ENCODE measurements at regions of chr2 and their contacts with region 1.

Region 1: DNA sequence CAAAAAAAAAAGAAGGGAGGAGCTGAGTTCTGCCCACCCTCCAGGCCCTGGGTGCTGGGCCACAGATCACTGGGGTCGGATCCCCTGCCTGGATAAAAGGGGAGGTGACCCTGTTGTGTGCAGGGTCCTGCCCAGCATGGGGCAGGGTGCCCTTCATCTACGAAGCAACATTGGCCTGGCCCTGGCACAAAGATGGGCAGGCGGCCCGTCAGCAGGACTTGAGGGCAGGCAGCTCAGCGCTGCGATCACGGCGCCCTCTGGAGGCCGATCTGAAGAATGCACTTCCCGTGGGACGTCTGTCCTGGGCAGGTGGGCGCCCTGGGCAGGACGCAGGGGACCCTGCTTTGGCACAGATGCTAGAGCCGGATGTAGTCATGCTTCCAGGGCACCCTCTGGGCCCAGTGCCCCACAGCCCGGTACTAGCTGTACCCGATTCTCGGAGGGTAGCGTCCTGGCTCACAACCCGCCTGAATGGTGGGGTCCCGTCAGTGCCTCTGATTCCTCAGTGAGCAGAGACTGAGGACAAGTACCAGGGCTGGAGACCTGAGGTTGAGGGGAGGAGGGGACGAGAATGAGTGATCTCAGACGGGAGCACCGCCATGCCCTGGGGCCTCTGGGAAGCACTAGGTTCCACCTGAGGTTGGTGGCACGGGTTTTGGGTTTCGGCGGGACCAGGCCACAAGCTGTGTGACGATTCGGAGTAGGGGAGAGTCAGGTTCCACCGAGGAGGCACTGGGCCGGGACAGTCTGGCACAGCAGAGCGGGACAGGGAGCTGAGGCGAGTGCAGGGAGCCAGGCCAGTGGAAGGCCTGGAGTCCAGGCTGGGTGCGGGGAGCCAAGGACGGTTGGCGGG is 18.0 kb downstream of the ARID5A start:
- DNase-seq: peak; percentile 35 to 87 (median 61)
- ATAC-seq: peak; percentile 47 to 76 (median 74)
- H3K4me3 ChIP-seq: no peak overlapping the region
- H3K4me3 Mint-ChIP-seq: peak overlapping the region; percentile 6 to 39 (median 28)
- H3K27ac ChIP-seq: no peak overlapping the region
- H3K27ac Mint-ChIP-seq: peak overlapping the region in 1 of 2 donors; percentile 79
- H3K4me1 ChIP-seq: peaks cover 0 to 20% of the 10 kb centered on the region in 2 experiments
- H3K4me1 Mint-ChIP-seq: peaks cover 22 to 36% (median 32%) of the 10 kb centered on the region in 3 donors
- H3K27me3 ChIP-seq: no peaks in the 10 kb centered on the region
- H3K27me3 Mint-ChIP-seq: no peaks in the 10 kb centered on the region

Region 2: DNA sequence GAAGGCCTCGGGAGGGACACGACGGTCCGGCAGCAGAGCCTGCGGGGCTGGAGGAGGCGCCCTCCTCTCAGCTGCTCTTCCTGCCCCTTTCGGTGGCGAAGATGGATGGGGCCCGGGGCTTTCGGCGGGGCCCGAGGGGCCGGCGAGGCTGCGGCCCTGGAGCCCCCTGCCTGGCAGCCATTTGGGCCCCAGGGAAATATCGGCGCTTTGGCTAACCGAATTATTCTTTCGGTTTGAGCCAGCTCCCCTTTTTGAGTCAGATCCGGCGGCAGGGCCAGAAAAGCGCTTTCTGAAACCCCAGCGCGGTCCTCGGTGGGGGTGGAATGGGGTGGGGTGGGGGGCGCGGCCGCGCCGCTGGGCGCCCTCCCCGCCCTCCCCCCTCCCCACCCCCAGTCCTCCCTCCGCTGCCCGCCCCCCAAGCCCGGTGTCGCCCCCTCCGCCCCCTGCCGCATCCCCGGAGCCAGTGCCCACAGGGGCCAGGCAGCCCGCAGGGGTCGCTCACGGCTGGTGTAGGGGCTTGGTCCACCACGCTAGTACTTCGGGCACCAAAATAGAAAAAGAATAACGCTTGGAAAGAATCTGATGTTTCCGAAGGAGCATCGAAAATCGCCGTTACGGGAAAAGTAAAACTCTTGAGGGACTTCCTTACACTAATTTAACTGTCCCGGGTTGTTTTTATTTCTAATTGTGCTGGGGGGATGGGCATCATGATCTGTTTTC is 27.1 kb before region 1 on chr2:
- CTCF ChIA-PET with region 1: interaction called, 5 to 15 read pairs
- POLR2A ChIA-PET with region 1: interaction called in 1 of 2 experiments, 3 read pairs
- DNase-seq: peak in 21 of 35 experiments; percentile 25 to 66 (median 38)
- ATAC-seq: peak; percentile 19 to 35 (median 28)
- H3K4me3 ChIP-seq: peak overlapping the region; percentile 56 to 77
- H3K4me3 Mint-ChIP-seq: peak overlapping the region; percentile 76 to 78 (median 78)
- H3K27ac ChIP-seq: peak overlapping the region; percentile 44
- H3K27ac Mint-ChIP-seq: peak overlapping the region; percentile 83 to 87
- H3K4me1 ChIP-seq: peaks cover 12 to 82% of the 10 kb centered on the region in 2 experiments
- H3K4me1 Mint-ChIP-seq: peaks cover 54 to 78% (median 63%) of the 10 kb centered on the region in 3 donors
- H3K27me3 ChIP-seq: peaks cover 0 to 7% of the 10 kb centered on the region in 2 experiments
- H3K27me3 Mint-ChIP-seq: no peaks in the 10 kb centered on the region

Region 3: DNA sequence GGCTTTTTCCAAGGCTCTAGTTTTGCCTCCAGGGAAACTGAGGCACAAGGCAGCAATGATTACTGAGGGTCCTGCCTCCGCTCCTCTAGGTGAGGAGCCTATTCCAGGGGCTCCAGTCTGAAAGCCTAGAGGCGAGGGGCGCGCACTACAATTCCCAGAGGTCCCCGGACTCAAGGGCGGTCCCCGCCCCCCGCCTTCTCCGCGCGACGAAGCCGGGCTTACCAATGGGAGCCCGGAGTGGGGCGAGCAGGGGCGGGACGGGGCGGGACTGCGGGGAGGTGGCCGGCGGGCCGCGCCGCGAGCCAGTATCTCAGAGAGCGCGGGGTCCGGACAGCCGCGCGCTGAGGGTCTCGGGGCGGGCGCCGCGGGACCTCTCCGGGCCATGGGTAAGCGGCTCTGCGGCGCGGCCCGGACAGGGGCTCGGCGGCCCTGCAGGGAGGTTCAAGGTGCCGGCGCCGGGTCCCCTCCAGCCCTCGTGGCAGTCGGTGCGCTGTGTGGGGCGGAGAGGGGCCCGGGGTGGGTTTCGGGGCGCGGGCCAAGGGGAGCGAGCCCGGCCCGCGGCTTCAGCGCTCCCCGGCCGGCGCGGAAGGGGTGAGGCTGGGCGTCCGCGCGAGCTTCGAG is 18.0 kb before region 1 on chr2 and contains the start of gene ARID5A:
- CTCF ChIA-PET with region 1: interaction called in 1 of 2 experiments, 48 read pairs
- POLR2A ChIA-PET with region 1: interaction called, 8 to 11 read pairs
- DNase-seq: peak; percentile 82 to 95 (median 92)
- ATAC-seq: peak; percentile 61 to 82 (median 72)
- H3K4me3 ChIP-seq: peak within 1 kb of the TSS; percentile 82 to 96
- H3K4me3 Mint-ChIP-seq: peak within 1 kb of the TSS; percentile 93 to 96 (median 94)
- H3K27ac ChIP-seq: peak within 1 kb of the TSS; percentile 97
- H3K27ac Mint-ChIP-seq: peak within 1 kb of the TSS; percentile 98 to 99
- H3K4me1 ChIP-seq: peaks cover 23 to 62% of the 10 kb centered on the region in 2 experiments
- H3K4me1 Mint-ChIP-seq: peaks cover 56 to 61% (median 57%) of the 10 kb centered on the region in 3 donors
- H3K27me3 ChIP-seq: no peaks in the 10 kb centered on the region
- H3K27me3 Mint-ChIP-seq: no peaks in the 10 kb centered on the region
- total RNA-seq, gene ARID5A: 105 to 140 (median 116) TPM

Measured in T-cell (primary cell).